AG04449 (cell line): ENCODE measurements at regions of chr7 and their contacts with region 1.

Region 1: DNA sequence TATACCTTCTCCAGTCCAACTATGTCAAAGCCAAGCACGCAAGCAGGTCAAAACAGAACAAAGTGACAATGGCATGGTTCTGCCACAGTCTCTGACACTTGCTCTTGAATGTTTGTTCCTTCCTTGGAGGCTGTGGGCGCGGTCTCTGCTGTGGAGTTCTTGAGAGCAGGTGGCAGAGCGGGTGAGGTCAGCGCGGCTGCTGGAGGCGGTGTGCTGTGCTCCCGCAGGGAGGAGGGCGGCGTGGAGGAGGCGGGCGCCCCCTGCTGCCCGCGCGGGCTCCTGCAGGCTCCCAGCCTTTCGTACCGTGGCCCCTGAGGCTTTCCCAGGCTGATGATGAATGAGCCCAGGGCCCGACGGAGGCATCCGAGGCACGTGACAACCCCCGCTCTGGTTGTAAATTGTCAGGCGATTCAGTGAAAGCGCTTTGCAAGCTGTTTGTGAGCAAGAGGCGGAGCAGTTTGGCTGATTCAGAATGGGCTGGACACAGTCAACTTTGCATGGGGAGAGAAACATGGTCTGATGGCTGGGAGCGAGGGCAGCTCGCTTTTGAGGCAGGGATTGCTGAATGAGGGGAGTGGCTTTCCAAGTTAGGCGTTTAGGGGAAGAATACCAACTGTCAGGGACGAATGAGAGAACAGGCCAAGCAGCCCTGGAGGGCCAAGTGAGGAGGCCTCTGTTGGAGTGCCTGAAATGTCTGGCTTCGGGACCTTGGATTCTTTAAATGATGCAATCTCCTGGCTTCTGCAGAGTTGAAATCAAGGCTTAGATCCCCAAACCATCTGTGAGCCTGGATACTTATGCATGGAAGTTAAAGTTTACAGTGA is 46.6 kb downstream of the CDHR3 start:
- DNase-seq: peak; percentile 92
- H3K4me3 ChIP-seq: peak overlapping the region; percentile 15; the same call in 1 of the 2 replicates
- CTCF ChIP-seq: peak; percentile 98

Region 2: DNA sequence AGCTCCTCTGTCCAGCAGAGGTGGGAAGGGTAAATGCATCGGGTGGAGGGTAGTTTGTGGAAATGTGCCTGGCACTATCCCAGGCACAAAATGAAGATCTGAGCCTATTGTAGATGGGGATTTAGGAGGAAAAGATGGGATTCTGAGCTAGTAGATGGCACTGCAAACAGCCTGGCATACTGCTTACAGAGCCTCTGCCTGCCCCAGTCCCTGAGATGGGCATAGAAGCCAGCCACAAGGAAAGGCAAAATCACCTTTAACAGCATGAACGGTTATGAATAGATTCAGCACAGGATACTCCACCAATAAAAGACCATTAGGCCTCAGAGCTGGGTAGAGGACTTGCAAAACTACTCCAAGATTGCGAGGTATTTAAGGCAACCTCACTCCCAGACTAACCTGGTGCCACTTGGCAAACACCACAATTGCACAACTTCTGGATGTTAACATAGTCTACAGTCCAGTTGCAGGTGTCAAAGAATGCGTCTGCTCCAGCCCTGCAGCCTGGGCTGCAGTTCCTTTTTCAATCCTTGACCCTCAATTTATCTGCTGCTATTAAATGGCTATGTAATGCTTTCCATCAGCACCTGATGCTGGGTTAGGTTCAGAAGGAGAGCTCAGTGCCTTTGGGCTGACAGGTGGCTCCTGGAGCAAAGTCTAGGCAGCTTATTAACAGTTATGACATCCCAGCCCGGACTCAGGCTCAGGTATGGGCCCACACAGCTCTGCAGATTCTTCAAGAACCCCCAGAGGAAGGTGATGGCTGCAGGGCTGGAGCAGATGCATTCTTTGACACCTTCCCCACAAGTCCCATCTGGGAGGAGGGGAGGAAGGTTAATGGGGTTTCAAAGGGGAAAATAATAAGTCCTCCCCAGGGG is 12.5 kb before region 1 on chr7:
- CTCF ChIA-PET with region 1: interaction called, 39 read pairs
- POLR2A ChIA-PET with region 1: no interaction called
- DNase-seq: no peak
- H3K4me3 ChIP-seq: no peak overlapping the region
- CTCF ChIP-seq: no peak

Region 3: GRCh38 chr7:106022193-106022821 is 12.7 kb after region 1 on chr7:
- CTCF ChIA-PET with region 1: interaction called, 26 read pairs
- POLR2A ChIA-PET with region 1: no interaction called
- DNase-seq: no peak
- H3K4me3 ChIP-seq: no peak overlapping the region
- CTCF ChIP-seq: no peak